AG04449 (cell line): ENCODE measurements at regions of chr3 and their contacts with region 1.

Region 1: DNA sequence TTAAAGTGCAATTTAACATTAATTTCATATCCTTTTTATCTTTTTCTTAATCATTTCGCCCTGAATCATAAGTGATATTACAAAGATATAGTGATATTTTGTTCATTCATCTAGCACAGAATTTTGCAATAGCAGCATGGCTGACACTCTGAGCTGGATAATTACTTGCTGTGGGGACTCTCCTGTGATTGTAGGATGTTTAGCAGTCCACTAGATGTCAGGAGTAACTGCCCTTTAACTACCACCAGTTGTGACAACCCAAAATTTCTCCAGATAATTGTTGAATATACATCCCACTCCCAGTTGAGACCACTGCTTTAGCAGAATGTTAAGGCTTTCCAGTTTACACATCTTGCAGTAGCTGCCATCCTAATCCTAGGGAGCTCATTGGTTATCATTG is 196.8 kb upstream of the MBNL1 start:
- DNase-seq: no peak
- H3K4me3 ChIP-seq: no peak overlapping the region
- CTCF ChIP-seq: peak; percentile 48

Region 2: DNA sequence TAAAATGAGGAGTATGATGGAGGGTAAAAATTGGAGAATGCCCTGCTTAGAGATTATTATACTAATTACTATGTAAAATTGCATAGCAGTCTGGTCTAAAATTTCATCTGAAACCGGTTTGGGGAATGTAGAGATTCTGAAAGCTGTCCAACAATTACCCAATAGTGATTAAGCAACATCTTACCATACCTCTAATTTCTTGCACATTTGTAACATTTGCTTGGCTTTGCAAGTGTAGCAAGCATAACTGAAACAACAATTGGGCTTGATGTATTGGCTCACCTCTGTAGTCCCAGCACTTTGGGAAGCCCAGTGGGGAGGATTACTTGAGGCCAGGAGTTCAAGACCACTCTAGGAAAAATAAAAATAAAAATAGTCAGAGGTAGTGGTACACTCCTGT is 320.8 kb before region 1 on chr3:
- CTCF ChIA-PET with region 1: no interaction called
- POLR2A ChIA-PET with region 1: no interaction called
- DNase-seq: peak; percentile 2
- H3K4me3 ChIP-seq: no peak overlapping the region
- CTCF ChIP-seq: no peak

Region 3: DNA sequence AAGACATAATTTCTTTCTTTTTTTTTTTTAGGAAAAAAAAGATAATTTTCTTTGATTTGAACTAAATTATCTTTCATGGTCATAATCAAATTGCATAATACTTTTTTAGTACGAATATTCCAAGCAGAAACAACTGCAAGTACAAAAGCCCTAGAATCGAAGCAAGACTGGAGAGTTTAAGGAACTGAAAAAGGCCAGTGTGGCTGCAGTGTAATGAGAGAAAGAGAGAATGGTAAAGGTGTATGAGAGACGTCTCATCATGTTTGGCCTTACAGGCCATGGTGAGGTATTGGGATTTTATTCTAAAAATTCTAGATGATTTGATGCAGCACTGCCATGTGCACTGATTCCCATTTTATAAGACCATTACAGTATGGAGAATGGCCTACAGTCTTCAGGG is 17.6 kb before region 1 on chr3:
- CTCF ChIA-PET with region 1: interaction called, 13 read pairs
- POLR2A ChIA-PET with region 1: no interaction called
- DNase-seq: no peak
- H3K4me3 ChIP-seq: no peak overlapping the region
- CTCF ChIP-seq: no peak

Region 4: DNA sequence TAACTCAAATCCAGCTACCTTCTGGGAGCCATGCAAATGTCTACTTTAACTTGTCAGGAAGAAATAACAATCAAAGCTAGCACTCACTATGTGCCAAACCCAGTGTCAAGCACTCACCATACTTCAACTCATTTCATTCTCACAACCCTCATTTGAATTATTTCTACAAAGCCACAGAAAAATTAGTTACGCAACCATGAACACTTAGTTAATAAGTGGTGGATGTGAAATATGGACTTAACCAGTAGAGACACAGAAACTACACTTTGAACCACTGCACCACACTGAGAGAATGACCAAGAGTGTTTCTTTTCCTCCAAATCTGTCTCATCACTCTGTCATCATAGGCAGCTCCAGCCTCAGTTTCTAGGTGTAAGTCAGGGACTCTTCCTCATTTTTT is 105.8 kb after region 1 on chr3:
- CTCF ChIA-PET with region 1: no interaction called
- POLR2A ChIA-PET with region 1: no interaction called
- DNase-seq: no peak
- H3K4me3 ChIP-seq: no peak overlapping the region
- CTCF ChIP-seq: no peak

Region 5: GRCh38 chr3:152281133-152281713 is 209.3 kb after region 1 on chr3:
- CTCF ChIA-PET with region 1: interaction called, 10 read pairs
- POLR2A ChIA-PET with region 1: no interaction called
- DNase-seq: no peak
- H3K4me3 ChIP-seq: no peak overlapping the region
- CTCF ChIP-seq: no peak

Region 6: GRCh38 chr3:152444029-152444641 is 372.2 kb after region 1 on chr3:
- CTCF ChIA-PET with region 1: interaction called, 27 read pairs
- POLR2A ChIA-PET with region 1: no interaction called
- DNase-seq: no peak
- H3K4me3 ChIP-seq: no peak overlapping the region
- CTCF ChIP-seq: peak; percentile 34

Region 7: DNA sequence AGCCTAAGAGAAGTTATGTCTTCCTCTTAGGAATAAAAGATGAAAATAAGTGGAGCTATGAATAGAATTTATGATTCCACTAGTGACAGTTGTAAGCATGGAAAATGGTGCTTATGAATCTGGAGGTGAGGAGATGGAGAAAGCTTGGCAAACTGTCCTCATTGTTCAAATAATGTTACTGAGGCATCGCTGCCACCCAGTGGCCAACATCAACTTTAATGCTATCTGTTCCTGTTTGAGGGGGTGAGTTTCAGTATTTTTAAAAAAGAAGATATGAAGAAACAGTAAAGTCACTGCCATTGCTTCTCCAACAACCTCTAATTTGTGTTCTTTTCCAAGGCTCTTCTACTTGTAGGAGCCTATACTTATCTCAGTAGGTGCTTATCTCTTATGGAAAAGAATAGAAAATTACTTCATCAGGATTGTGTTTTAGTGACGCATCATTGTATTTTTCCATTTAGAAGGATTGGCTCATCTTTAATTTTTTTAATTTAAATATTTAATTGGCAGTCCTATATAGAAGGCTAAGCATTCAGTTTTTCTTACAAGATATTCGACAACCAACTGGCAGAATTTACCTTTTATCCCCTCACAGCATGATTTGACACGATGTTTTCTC is 502.6 kb after region 1 on chr3:
- CTCF ChIA-PET with region 1: interaction called, 14 read pairs
- POLR2A ChIA-PET with region 1: no interaction called
- DNase-seq: no peak
- H3K4me3 ChIP-seq: no peak overlapping the region
- CTCF ChIP-seq: peak; percentile 61